ENCODE measurements at regions of chr1 and their contacts with region 1.

Region 1: GRCh38 chr1:165914136-165914798 is 86.9 kb downstream of the UCK2 start:
- DNase-seq: peak; percentile 80
- ATAC-seq: peak; percentile 88
- H3K4me3 Mint-ChIP-seq: no peak overlapping the region
- H3K27ac Mint-ChIP-seq: no peak overlapping the region
- H3K4me1 Mint-ChIP-seq: peaks cover 2% of the 10 kb centered on the region
- H3K27me3 Mint-ChIP-seq: no peaks in the 10 kb centered on the region

Region 2: DNA sequence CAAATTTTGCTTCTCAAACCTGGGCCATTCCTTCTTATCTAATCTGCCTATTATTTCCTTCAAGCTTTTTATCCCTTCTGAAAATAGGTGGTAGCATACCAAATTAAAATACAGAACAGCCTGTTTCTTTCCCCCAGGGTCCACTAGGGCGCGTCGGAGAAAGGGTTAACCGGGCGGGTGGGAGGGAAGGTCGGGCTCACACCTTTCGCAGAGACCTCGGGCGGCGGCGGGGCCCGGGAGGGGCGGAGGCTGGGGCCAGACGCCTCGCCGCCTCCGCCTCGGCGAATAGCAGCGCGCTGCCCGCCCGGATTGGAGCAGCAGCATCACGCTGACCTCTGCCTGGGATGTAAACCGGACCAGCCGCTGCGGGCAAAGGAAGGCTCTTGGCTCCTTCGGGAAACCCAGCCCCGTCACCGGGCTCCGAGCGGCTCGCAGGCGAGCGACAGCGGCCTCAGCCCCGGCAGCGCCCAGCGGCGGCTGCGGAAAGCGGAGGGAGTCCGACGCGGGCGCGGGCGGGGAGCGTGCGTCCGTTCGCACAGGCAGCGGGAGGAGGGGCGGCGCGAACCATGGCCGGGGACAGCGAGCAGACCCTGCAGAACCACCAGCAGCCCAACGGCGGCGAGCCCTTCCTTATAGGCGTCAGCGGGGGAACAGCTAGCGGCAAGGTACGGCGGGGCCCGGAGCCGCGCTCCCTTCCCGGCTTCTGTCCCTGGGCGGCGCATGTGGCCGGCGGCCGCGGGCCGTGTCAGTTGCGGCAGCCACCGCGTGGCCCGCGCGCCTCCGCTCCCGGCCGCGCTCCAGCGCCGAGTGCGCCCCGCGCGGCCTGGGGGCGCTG is 86.8 kb before region 1 on chr1 and contains the start of gene UCK2:
- CTCF ChIA-PET with region 1: interaction called, 26 read pairs
- POLR2A ChIA-PET with region 1: no interaction called
- DNase-seq: peak; percentile 63
- ATAC-seq: peak; percentile 78
- H3K4me3 Mint-ChIP-seq: peak within 1 kb of the TSS; percentile 88
- H3K27ac Mint-ChIP-seq: peak within 1 kb of the TSS; percentile 88
- H3K4me1 Mint-ChIP-seq: peaks cover 18% of the 10 kb centered on the region
- H3K27me3 Mint-ChIP-seq: peaks cover 10% of the 10 kb centered on the region
- total RNA-seq, gene UCK2: 28.4 to 32.4 TPM

Region 3: GRCh38 chr1:165884690-165885304 is 29.5 kb before region 1 on chr1:
- CTCF ChIA-PET with region 1: interaction called, 12 read pairs
- POLR2A ChIA-PET with region 1: no interaction called
- DNase-seq: no peak
- ATAC-seq: no peak
- H3K4me3 Mint-ChIP-seq: no peak overlapping the region
- H3K27ac Mint-ChIP-seq: no peak overlapping the region
- H3K4me1 Mint-ChIP-seq: peaks cover 5% of the 10 kb centered on the region
- H3K27me3 Mint-ChIP-seq: no peaks in the 10 kb centered on the region

Region 4: GRCh38 chr1:165965857-165966256 is 51.6 kb after region 1 on chr1:
- CTCF ChIA-PET with region 1: no interaction called
- POLR2A ChIA-PET with region 1: no interaction called
- DNase-seq: no peak
- ATAC-seq: no peak
- H3K4me3 Mint-ChIP-seq: no peak overlapping the region
- H3K27ac Mint-ChIP-seq: no peak overlapping the region
- H3K4me1 Mint-ChIP-seq: no peaks in the 10 kb centered on the region
- H3K27me3 Mint-ChIP-seq: peaks cover 11% of the 10 kb centered on the region

Measured in activated CD8-positive, alpha-beta T cell treated with anti-CD3 and anti-CD28 coated beads, Interleukin-2, amount 10 ng/mL, durations not matched to agents 7 days and 5 days (primary cell).